ENCODE measurements at regions of chr14 and their contacts with region 1.

Region 1: GRCh38 chr14:88562831-88563686 is at the start of gene ZC3H14:
- DNase-seq: peak; percentile 93
- ATAC-seq: peak; percentile 99
- total RNA-seq, gene ZC3H14: 49.4 TPM

Region 2: DNA sequence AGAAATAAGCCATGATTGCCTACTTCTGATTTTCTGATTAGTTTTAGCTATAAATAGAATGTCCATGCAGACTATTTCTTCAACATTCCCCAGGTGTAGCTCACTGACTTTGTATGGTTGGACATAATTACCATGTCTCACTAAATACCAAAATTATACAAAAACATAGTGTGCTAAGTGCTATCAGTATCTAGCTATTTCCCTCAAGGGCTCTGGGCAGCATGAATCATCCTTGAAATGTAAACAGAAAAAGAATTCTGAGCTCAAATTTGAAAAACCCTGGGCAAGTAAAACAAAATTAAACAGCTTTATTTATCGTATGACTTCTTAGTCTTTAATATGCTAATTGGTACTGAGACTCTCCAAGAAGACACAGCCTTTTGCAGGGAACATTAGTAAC is 94.7 kb before region 1 on chr14:
- intact Hi-C with region 1: no loop called
- DNase-seq: no peak
- ATAC-seq: no peak

Region 3: DNA sequence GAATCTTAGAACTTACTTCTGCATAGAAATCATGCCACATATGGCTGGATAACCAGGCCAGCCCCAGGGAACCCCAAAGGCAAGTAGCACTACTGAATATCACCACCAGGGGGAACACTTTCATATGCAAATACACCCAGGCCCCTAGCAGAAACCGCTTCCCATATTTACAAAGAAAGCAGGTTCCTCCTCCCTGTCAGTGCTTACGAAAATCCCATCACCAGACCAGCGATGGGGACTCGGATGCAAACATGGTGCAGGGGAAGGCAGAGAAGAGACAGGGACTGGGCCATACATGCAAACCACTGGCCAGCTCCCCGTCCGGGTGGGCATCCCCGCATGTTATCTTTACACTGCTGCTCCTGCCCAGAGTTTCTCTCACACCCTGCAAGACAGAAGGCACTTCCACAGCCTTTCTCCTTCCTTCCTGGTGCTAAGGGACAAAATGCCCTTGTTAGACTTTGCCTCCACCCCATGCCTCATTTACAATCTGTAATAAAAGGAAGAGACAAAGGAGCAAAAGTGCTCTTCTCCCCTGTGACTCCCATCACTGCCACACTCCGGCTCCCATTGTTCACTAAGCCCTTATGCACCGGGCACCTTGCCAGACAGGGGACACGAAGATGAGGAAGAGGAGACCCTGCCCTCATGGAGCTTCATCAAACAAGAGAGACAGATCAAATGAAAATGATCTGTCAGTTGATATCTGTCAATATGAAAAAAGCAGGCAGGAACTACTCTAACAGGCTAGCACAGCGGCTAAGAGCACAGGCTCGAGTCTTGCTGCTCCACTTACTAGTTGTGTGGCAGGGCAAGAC is 70.6 kb before region 1 on chr14:
- intact Hi-C with region 1: loop called (anchors 5 kb)
- DNase-seq: no peak
- ATAC-seq: peak; percentile 73

Region 4: DNA sequence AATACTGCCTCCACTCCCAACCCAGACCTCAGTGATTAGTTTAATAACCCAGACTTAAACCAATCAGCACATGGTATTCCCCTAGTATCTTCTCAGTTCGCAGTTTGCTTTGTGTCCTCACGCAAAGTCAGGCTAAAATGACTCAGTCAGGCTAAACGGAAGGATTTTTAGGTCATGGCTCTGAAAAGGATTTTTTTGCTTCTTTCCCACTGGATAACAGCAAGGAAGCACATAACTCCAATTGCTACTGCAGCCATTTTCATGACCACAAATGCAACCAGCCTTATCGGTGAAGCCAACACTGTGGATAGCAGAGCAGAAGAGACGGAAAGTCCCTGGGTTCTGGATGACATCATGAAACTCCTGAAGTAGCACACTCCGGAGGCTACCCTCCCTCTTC is 67.5 kb after region 1 on chr14:
- intact Hi-C with region 1: no loop called
- DNase-seq: no peak
- ATAC-seq: no peak

Region 5: GRCh38 chr14:88955455-88955854 is 392.4 kb after region 1 on chr14:
- intact Hi-C with region 1: no loop called
- DNase-seq: no peak
- ATAC-seq: no peak